ENCODE measurements at regions of chr17 and their contacts with region 1.

Region 1: DNA sequence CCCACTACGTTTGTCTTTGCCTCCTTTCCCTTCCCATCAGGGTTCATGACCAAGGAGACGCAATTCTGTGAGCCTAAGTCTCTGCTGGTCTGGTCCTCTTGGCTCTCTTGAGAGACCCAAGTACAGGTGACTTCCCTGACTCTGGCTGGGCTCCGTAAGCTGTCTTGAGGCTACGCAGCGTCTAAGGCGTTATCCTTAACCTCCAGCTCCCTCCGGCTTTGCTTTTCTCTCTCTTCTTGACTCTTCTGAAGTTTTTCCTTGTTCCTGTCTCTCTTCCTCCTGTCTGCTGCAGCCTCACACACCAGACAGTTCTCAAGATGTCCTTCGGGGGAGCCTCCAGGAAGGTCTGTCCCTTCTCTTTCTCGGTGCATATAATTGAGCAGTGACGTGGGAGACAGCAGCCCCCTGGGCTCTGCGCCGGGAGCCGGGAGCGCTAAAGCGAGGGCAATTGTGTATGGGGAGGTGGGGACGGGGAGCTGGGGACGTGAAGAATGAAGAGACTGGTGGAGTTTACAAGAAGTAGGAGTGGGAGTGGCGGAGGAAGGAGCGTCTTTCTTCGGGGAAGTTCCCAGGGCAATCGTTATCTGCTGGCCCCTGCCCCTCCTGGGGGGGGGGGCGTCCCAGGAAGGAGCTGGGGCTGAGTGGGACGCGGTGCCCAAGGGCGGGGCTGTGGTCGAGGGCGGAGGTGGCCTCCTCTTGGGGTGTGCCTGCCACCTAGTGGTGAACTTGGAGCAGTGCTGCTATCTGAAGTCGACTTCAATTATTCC is 6.9 kb upstream of the PIRT start:
- DNase-seq: peak; percentile 82

Region 2: GRCh38 chr17:10737168-10737622 is 107.6 kb before region 1 on chr17:
- CTCF ChIA-PET with region 1: interaction called, 30 read pairs
- POLR2A ChIA-PET with region 1: no interaction called
- DNase-seq: peak; percentile 72

Region 3: DNA sequence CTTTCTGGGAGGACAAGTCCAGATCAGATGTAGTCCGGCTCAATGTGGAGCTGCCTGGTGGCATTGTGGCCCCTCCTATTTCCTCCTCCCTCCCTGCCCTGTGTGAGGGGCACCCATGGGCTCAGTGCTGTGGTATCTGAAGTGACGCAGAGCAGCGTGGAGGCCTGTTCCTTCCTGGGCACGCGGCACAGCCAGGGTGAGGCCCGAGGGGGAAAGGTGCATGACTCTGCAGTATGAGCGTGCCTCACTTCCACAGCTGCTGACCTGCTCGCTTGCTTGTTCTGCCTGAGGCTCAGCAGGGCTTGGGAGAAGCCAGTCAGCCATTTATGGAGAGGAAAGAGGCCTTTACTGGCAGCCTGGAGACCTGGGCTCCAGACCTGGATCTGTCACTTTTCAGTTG is 52.7 kb before region 1 on chr17:
- CTCF ChIA-PET with region 1: no interaction called
- POLR2A ChIA-PET with region 1: no interaction called
- DNase-seq: no peak